PC-3 (cell line): ENCODE measurements at regions of chr1 and their contacts with region 1.

Region 1: GRCh38 chr1:235917267-235917811 is 50.6 kb upstream of the LYST start:
- DNase-seq: peak; percentile 97
- ATAC-seq: peak; percentile 77
- H3K4me3 ChIP-seq: no peak overlapping the region
- H3K27ac ChIP-seq: peak overlapping the region; percentile 88
- H3K4me1 ChIP-seq: peaks cover 68% of the 10 kb centered on the region
- H3K27me3 ChIP-seq: no peaks in the 10 kb centered on the region
- CTCF ChIP-seq: no peak

Region 2: DNA sequence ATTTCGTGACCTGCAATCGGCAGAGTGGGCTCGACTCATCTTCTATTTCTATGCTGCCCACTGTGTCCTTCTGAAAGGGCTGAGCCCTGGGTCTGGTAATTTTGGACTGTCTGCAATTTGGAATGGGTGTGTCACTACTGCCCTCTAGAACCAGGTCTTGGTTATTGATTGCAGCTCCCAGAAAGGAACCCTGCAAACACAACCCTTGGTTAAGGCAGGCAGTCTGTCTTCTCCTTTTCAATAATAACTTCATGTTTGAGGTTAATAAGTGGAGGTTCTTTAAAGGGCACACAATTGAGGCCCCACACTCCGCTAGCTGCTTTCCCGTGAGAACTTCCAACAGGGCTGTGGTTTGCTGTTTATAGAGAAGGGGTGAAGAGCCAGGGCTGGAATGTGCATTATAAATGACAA is 29.2 kb after region 1 on chr1:
- CTCF ChIA-PET with region 1: interaction called, 3 read pairs
- POLR2A ChIA-PET with region 1: no interaction called
- intact Hi-C with region 1: loop called (anchors 1 kb)
- DNase-seq: peak; percentile 46
- ATAC-seq: peak; percentile 35
- H3K4me3 ChIP-seq: no peak overlapping the region
- H3K27ac ChIP-seq: no peak overlapping the region
- H3K4me1 ChIP-seq: peaks cover 24% of the 10 kb centered on the region
- H3K27me3 ChIP-seq: no peaks in the 10 kb centered on the region
- CTCF ChIP-seq: peak; percentile 67